Transverse colon (tissue), 4 donors: ENCODE measurements at regions of chr6 and their contacts with region 1.

Region 1: DNA sequence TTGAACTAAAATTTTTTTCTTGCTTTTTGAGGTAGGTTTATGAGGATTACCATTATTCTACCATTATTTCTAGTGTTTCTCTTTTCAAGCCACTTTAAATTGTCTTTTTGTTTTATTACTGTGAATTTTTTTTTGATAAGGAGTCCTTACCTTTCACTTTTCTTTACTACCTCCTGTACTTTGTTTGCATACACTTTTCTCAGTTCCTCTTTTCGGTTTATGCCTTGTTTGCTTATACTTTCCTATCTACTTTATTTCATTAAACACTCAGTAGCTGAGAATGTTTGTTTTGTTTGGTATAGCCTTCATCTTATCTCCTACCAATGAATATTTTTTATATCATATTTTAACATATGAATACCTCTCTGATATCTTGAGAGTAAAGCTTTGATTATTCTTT is 147.9 kb downstream of the TFAP2B start:
- DNase-seq: no peak
- H3K4me3 ChIP-seq: no peak overlapping the region
- H3K27ac ChIP-seq: no peak overlapping the region
- H3K4me1 ChIP-seq: no peaks in the 10 kb centered on the region
- H3K27me3 ChIP-seq: no peaks in the 10 kb centered on the region
- CTCF ChIP-seq: no peak
- EP300 ChIP-seq: no peak
- POLR2A ChIP-seq: no peak

Region 2: DNA sequence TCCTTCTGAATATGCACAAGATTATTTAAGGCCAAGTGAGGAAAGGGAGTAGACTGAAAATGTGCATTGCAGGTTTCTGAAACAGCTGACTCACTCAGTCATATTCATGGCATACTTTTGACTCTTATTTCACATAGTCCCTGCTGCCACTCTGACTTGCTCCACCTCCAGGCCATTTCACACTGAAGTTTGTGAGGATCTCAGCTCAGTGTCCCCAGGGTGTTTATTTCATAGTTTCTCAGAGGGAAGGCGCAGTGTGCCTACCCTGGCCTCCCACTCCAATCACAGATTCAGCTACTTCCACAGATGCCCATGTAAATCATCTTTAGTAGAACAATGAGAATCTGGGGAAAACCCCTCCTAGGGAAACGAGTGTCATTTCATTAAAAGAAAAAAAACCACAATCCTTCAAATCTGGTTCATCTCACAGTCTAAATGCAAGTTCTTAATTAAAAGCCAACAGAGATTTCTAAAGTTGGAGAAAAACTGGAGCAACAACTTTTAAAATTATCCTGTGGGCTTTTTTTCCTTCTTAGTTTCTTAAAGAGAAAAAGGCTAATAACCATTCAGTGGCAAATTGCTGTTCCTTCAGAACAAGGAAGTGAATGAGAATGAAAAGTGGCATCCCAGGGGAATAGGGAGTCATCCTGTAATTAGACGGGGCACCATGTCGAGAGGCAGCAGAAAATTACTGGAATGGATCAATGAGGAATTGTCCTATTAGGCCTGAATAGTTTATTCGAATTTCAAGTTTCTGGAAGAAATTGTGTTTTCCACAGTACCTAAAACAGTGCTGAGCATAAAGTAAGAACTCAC is 14.2 kb before region 1 on chr6:
- in situ Hi-C with region 1: no loop called
- intact Hi-C with region 1: loop called (anchors 1 kb)
- DNase-seq: no peak
- H3K4me3 ChIP-seq: no peak overlapping the region
- H3K27ac ChIP-seq: no peak overlapping the region
- H3K4me1 ChIP-seq: no peaks in the 10 kb centered on the region
- H3K27me3 ChIP-seq: no peaks in the 10 kb centered on the region
- CTCF ChIP-seq: no peak
- EP300 ChIP-seq: no peak
- POLR2A ChIP-seq: no peak

Region 3: GRCh38 chr6:51292656-51293055 is 326.1 kb after region 1 on chr6:
- in situ Hi-C with region 1: no loop called
- intact Hi-C with region 1: no loop called
- DNase-seq: no peak
- H3K4me3 ChIP-seq: no peak overlapping the region
- H3K27ac ChIP-seq: no peak overlapping the region
- H3K4me1 ChIP-seq: no peaks in the 10 kb centered on the region
- H3K27me3 ChIP-seq: no peaks in the 10 kb centered on the region
- CTCF ChIP-seq: no peak
- EP300 ChIP-seq: no peak
- POLR2A ChIP-seq: no peak